PC-9 (cell line): ENCODE measurements at regions of chr10 and their contacts with region 1.

Region 1: DNA sequence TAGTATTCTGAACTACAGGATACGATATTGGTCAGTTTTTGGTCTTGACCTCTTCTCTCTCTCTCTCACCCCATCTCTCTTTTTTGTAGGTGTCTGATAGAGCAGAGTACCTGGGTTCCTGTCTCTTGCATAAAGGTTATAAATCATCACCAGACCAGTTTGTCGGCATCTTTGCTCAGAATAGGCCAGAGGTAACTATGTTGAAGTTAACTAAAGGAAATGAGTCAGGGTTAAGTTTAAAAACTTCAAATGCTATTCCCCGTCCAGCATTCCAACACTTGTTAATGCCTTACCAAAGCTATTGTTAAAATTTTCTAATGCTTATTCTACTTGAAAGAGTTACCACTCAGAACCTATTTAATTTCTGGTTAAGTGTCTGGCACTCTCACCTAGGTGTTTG is 30.7 kb downstream of the ACSL5 start:
- DNase-seq: peak; percentile 22 to 92
- H3K4me3 ChIP-seq: peak overlapping the region; percentile 33
- H3K27ac ChIP-seq: peak overlapping the region; percentile 99
- H3K4me1 ChIP-seq: peaks cover 43% of the 10 kb centered on the region
- H3K27me3 ChIP-seq: no peaks in the 10 kb centered on the region
- CTCF ChIP-seq: no peak

Region 2: GRCh38 chr10:112361951-112362751 is 42.5 kb before region 1 on chr10:
- CTCF ChIA-PET with region 1: no interaction called
- POLR2A ChIA-PET with region 1: no interaction called
- intact Hi-C with region 1: loop called (anchors 5 kb)
- DNase-seq: peak in 1 of 2 experiments; percentile 60
- H3K4me3 ChIP-seq: no peak overlapping the region
- H3K27ac ChIP-seq: peak overlapping the region; percentile 73
- H3K4me1 ChIP-seq: peaks cover 35% of the 10 kb centered on the region
- H3K27me3 ChIP-seq: no peaks in the 10 kb centered on the region
- CTCF ChIP-seq: no peak

Region 3: DNA sequence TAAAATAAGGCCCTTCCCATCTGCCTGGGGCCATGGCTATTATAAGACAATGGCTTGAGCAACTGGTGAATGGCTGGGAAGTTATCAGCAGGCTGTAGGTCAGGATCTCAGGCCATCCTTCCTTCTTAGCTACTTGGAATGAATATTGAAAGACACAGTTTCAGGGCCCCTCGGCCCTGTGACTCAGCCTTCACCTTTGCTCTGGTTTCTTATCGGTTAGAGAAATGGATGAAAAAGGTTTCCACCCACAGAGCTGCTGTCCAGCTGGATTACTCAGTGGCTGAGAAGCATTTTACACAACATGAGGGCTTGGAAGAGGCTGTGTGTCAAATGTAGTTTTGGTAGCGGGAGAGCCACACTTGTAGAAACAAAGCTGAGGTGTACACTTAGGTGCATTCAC is 21.3 kb before region 1 on chr10:
- CTCF ChIA-PET with region 1: no interaction called
- POLR2A ChIA-PET with region 1: no interaction called
- intact Hi-C with region 1: loop called (anchors 2 kb)
- DNase-seq: peak; percentile 56 to 92
- H3K4me3 ChIP-seq: no peak overlapping the region
- H3K27ac ChIP-seq: peak overlapping the region; percentile 94
- H3K4me1 ChIP-seq: peaks cover 89% of the 10 kb centered on the region
- H3K27me3 ChIP-seq: no peaks in the 10 kb centered on the region
- CTCF ChIP-seq: no peak

Region 4: GRCh38 chr10:112446855-112447711 is 42.5 kb after region 1 on chr10 and contains the starts of genes VTI1A and ZDHHC6:
- CTCF ChIA-PET with region 1: no interaction called
- POLR2A ChIA-PET with region 1: no interaction called
- intact Hi-C with region 1: no loop called
- DNase-seq: peak; percentile 63 to 65
- H3K4me3 ChIP-seq: peak within 1 kb of the TSS; percentile 97
- H3K27ac ChIP-seq: peak within 1 kb of the TSS; percentile 81
- H3K4me1 ChIP-seq: peaks cover 7% of the 10 kb centered on the region
- H3K27me3 ChIP-seq: no peaks in the 10 kb centered on the region
- CTCF ChIP-seq: no peak
- total RNA-seq, gene VTI1A: 18.1 and 18.3 TPM in 2 replicates
- total RNA-seq, gene ZDHHC6: 14.0 and 24.2 TPM in 2 replicates

Region 5: GRCh38 chr10:112755446-112756237 is 351.0 kb after region 1 on chr10:
- CTCF ChIA-PET with region 1: no interaction called
- POLR2A ChIA-PET with region 1: no interaction called
- intact Hi-C with region 1: no loop called
- DNase-seq: no peak
- H3K4me3 ChIP-seq: no peak overlapping the region
- H3K27ac ChIP-seq: no peak overlapping the region
- H3K4me1 ChIP-seq: peaks cover 14% of the 10 kb centered on the region
- H3K27me3 ChIP-seq: no peaks in the 10 kb centered on the region
- CTCF ChIP-seq: no peak